ENCODE measurements at regions of chr11 and their contacts with region 1.

Region 1: GRCh38 chr11:57530596-57531507 is at the start of gene TIMM10:
- DNase-seq: peak; percentile 97
- H3K4me3 Mint-ChIP-seq: peak within 1 kb of the TSS; percentile 90
- H3K27ac Mint-ChIP-seq: peak within 1 kb of the TSS; percentile 87
- H3K4me1 Mint-ChIP-seq: peaks cover 38% of the 10 kb centered on the region
- H3K27me3 Mint-ChIP-seq: no peaks in the 10 kb centered on the region
- total RNA-seq, gene TIMM10: 131 to 136 TPM

Region 2: GRCh38 chr11:57335343-57336110 is 195.3 kb before region 1 on chr11 and contains the start of gene SSRP1:
- CTCF ChIA-PET with region 1: interaction called, 4 read pairs
- intact Hi-C with region 1: loop called (anchors 1 kb)
- DNase-seq: peak; percentile 93
- H3K4me3 Mint-ChIP-seq: peak within 1 kb of the TSS; percentile 91
- H3K27ac Mint-ChIP-seq: peak within 1 kb of the TSS; percentile 99
- H3K4me1 Mint-ChIP-seq: peaks cover 41% of the 10 kb centered on the region
- H3K27me3 Mint-ChIP-seq: no peaks in the 10 kb centered on the region
- total RNA-seq, gene SSRP1: 304 to 322 TPM

Region 3: DNA sequence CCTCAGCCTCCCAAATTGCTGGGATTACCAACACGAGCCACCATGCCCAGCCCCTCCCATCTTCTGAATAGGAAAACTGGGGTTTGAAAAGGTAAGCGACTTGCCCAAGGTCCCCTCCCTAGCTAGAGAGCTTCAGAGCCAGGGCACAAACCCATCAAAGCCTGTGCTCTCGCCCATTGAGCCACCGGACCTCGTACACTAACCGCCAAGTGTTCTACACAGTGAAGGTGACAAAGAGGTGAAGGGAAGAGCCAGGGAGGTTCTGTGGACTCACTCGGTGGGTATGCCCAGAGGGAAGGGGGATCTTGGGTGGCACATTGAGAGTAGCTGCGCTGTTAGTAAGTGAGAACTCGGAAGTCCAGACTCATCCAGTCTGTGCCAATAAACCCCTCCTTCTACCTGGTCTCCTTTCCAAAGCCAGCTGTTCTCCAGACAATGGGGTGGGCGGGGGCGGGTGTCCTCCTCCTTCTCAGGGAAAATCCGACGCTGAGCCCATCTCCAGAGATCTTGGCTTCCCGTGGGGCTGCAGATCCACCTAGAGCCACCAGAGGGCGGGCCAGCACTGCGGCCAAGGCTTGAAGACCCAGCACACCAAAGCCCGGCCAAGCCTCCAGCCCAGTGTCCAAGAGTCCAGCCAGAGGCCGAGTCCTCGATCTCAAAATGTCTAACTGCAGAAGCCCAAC is 73.8 kb before region 1 on chr11:
- CTCF ChIA-PET with region 1: interaction called, 121 read pairs
- intact Hi-C with region 1: loop called (anchors 1 kb)
- DNase-seq: peak; percentile 85
- H3K4me3 Mint-ChIP-seq: peak overlapping the region; percentile 56
- H3K27ac Mint-ChIP-seq: no peak overlapping the region
- H3K4me1 Mint-ChIP-seq: peaks cover 25% of the 10 kb centered on the region
- H3K27me3 Mint-ChIP-seq: peaks cover 27% of the 10 kb centered on the region

Region 4: GRCh38 chr11:57493507-57494503 is 37.0 kb before region 1 on chr11:
- CTCF ChIA-PET with region 1: interaction called, 270 read pairs
- intact Hi-C with region 1: loop called (anchors 1 kb)
- DNase-seq: peak; percentile 93
- H3K4me3 Mint-ChIP-seq: no peak overlapping the region
- H3K27ac Mint-ChIP-seq: peak overlapping the region; percentile 93
- H3K4me1 Mint-ChIP-seq: peaks cover 12% of the 10 kb centered on the region
- H3K27me3 Mint-ChIP-seq: no peaks in the 10 kb centered on the region

Region 5: DNA sequence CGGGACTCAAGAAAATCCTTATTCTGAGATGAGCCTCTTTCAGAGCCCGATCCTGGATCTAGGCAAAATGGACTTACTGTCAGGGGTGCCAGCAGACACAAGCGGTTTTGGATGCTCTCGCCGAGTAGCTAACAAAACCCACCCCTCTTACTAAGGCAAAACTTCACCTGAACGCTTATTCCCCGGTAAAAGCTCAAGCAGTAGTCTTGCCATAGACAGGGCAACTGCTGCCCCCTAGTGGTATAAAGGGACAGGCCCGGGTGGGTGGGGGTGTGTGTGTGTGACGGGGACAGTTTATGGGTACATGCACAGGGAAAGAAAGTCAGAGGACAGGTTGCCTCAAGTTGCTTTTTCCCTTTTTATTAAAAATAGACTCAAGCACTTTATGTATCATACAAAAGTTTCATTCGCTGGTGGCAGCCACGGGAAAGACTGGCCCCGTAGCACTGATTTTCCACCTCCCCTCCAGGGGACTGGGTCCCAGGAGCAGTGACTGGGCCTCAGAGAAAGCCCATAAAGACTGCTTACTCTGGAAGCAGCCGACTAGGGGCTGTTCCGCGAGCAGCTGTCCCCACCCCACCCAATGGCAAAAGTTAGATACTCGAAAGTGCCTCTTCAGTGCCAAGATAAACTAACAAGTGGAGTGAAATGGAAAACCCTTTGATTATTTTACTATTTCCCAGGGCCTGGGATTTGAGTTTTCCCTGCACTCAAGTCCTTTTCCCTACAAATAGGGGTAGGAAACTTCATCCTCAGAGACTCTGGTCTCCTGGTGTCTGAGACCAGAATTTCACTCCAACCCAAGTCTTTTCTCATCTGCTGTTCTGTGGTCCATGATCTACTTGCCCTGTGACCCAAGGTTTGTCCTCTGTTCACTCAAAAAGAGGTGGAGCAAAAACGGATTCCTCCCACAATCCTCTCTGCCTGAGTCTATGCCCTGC is 114.2 kb after region 1 on chr11:
- CTCF ChIA-PET with region 1: interaction called, 17 read pairs
- intact Hi-C with region 1: loop called (anchors 1 kb)
- DNase-seq: peak; percentile 94
- H3K4me3 Mint-ChIP-seq: no peak overlapping the region
- H3K27ac Mint-ChIP-seq: no peak overlapping the region
- H3K4me1 Mint-ChIP-seq: peaks cover 35% of the 10 kb centered on the region
- H3K27me3 Mint-ChIP-seq: peaks cover 39% of the 10 kb centered on the region

Region 6: GRCh38 chr11:57712256-57713150 is 181.7 kb after region 1 on chr11 and contains the start of gene TMX2:
- CTCF ChIA-PET with region 1: interaction called, 4 read pairs
- intact Hi-C with region 1: loop called (anchors 1 kb)
- DNase-seq: peak; percentile 95
- H3K4me3 Mint-ChIP-seq: peak within 1 kb of the TSS; percentile 99
- H3K27ac Mint-ChIP-seq: peak within 1 kb of the TSS; percentile 92
- H3K4me1 Mint-ChIP-seq: peaks cover 50% of the 10 kb centered on the region
- H3K27me3 Mint-ChIP-seq: no peaks in the 10 kb centered on the region
- total RNA-seq, gene TMX2: 49.8 to 54.7 TPM

Region 7: DNA sequence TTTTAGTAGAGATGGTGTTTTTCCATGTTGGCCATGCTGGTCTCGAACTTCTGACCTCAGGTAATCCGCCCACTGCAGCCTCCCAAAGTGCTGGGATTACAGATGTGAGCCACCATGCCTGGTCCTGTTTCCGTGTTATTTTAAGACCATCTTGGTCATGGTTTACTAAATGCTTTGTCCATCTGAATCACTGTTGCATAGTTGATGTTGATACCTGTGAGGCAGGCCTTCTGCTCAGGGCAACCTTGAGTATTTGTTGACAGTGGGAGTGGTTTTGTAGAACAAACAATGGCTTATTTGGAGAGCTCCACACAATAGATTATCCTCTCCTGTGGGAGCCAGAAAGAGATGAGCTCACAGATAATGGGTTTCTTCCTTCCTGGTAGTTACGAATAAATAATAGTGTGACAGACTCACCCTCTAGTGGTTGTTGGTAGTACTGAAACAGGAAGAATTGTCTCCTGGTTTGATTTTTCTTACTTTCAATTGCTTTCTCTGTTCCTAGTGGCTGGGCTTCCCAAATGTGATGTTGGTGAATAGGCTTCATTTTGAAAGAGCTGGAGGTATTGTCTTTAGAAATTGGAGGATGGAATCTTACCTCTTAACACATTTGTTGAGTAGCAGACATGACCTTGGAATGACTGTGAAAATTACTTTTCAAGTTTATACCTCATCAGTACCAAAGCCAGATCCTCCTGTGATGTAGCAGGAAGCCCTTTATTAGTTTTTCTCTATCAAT is 269.8 kb after region 1 on chr11:
- CTCF ChIA-PET with region 1: no interaction called
- intact Hi-C with region 1: loop called (anchors 1 kb)
- DNase-seq: peak; percentile 12
- H3K4me3 Mint-ChIP-seq: no peak overlapping the region
- H3K27ac Mint-ChIP-seq: peak overlapping the region; percentile 60
- H3K4me1 Mint-ChIP-seq: peaks cover 25% of the 10 kb centered on the region
- H3K27me3 Mint-ChIP-seq: no peaks in the 10 kb centered on the region